Dendritic cell treated with granulocyte-macrophage colony-stimulating factor and Interleukin-4, amounts not matched to agents 40 ng/mL and 50 ng/mL, for 4 days (primary cell): ENCODE measurements at regions of chr9 and their contacts with region 1.

Region 1: GRCh38 chr9:132507746-132508469 is 74.5 kb upstream of the BARHL1 start:
- H3K4me3 Mint-ChIP-seq: no peak overlapping the region
- H3K27ac Mint-ChIP-seq: no peak overlapping the region
- H3K4me1 Mint-ChIP-seq: peaks cover 8% of the 10 kb centered on the region
- H3K27me3 Mint-ChIP-seq: peaks cover 25% of the 10 kb centered on the region

Region 2: DNA sequence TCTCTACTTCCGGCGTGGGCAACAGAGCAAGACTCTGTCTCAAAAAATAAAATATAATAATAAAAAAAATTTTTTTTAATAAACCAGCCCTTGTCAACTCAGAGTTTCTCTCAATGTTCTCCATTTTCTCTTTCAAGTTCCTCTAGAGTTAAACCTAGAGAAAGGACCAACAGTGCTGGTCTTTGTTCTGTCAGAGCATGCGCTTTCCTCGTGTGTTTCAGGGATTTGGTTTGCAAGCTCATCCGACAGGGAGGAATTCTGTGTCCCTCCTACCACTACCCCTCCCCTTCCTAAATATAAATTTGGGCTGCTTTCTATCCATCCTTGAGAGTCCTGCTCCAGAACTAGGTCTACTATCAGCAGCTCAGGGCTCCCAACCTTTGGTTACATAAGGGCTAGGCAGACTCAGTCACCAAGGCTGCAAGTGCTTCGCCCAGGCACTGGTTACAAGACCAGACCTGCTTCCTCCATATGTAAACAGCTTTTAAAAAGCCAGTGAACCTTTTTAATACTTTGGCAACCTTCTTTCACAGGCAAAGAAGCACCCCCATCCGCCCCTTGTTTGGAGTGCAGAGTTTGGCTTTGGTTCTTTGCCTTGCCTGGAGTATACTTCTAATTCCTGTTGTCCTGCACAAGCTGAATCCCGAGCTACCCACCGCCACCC is 166.6 kb before region 1 on chr9:
- intact Hi-C with region 1: no loop called
- H3K4me3 Mint-ChIP-seq: no peak overlapping the region
- H3K27ac Mint-ChIP-seq: no peak overlapping the region
- H3K4me1 Mint-ChIP-seq: no peaks in the 10 kb centered on the region
- H3K27me3 Mint-ChIP-seq: no peaks in the 10 kb centered on the region

Region 3: DNA sequence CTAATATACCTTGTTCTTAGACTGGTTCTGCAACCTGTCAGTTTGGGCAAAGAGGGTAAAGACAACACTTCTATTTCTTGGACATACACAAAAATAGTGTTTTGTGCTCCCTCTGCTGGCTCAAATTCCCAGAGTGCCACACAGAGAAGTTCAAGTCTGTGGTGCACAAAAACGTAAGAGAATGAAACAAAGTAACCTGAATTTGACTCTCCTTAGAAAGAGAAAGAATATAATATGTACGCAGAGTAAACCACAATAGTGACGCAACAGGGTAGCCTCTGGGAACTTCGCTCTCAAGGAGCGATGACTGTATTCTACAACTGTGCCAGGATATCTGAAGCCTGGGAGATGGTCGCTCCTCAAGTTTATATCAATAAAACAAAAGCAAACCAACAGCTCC is 143.3 kb after region 1 on chr9:
- intact Hi-C with region 1: loop called (anchors 5 kb)
- H3K4me3 Mint-ChIP-seq: no peak overlapping the region
- H3K27ac Mint-ChIP-seq: no peak overlapping the region
- H3K4me1 Mint-ChIP-seq: no peaks in the 10 kb centered on the region
- H3K27me3 Mint-ChIP-seq: no peaks in the 10 kb centered on the region